Left colon (tissue), 2 donors: ENCODE measurements at regions of chr4 and their contacts with region 1.

Region 1: GRCh38 chr4:108570993-108571569 is 49.3 kb upstream of the RPL34 start:
- DNase-seq: no peak
- ATAC-seq: no peak

Region 2: DNA sequence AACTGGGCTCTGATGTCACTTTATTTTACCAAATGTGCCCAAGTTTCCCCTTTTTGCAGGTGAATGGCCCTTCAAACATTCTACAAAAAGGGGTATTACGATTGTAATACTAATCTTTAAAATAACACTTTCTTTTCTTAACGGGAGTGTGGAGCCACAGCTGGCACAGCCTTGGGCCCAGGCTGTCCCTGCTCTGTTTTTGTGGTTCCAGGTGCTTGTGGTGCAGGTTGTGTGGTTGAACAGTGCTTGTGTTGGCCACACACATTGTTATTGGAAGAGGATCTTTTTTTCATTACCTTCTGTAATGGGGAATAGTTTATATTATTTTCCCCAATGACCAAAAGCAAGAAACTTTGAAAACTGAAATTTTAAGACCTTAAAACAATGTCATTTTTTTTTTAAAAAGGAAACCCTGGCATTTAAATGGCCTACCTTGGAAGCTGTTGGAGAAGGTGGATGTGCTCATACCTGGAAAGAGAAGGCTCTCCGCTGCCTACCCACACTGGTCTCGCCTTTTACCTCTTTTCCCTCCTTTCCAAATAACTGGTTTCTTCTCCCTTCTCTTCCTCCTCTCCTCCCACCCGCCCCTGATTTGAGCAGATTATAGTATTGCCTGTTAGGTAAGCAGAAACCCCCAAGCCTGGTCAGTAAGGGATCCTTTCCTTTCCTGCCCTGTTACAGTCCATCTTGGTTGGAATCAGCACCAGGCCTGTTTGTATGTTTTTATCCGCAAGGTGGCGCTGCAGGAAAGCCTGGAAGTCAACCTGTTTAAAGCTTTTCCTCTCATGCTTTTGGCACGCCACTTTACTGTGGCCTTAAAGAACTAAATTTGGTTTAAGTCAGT is 552.8 kb before region 1 on chr4:
- intact Hi-C with region 1: loop called (anchors 5 to 10 kb)
- DNase-seq: peak; percentile 62 to 87
- ATAC-seq: peak; percentile 83

Region 3: DNA sequence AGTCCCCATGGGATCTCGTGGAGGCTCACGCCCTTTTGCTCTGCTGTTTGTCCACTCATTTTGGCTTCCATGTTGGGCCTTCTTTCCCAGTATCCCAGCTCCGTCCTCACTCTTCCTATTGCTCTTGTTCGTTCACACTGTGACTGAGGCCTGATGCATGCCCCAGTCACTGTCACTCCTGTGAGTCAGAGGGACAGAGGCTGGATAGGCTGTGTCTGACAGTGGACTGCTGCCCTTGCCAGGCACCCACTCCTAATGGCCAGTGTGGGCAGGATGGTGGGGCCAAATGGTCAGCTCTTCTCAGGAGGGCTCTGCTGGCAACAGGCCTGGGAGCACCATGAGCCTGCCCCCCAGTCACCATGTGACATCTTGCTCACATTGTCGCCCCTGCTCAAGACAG is 541.4 kb before region 1 on chr4:
- intact Hi-C with region 1: loop called in 1 of 2 experiments (anchors 10 kb)
- DNase-seq: no peak
- ATAC-seq: no peak

Region 4: GRCh38 chr4:108433832-108434231 is 137.2 kb before region 1 on chr4:
- intact Hi-C with region 1: no loop called
- DNase-seq: no peak
- ATAC-seq: peak; percentile 77